ENCODE measurements at regions of chr1 and their contacts with region 1.

Region 1: DNA sequence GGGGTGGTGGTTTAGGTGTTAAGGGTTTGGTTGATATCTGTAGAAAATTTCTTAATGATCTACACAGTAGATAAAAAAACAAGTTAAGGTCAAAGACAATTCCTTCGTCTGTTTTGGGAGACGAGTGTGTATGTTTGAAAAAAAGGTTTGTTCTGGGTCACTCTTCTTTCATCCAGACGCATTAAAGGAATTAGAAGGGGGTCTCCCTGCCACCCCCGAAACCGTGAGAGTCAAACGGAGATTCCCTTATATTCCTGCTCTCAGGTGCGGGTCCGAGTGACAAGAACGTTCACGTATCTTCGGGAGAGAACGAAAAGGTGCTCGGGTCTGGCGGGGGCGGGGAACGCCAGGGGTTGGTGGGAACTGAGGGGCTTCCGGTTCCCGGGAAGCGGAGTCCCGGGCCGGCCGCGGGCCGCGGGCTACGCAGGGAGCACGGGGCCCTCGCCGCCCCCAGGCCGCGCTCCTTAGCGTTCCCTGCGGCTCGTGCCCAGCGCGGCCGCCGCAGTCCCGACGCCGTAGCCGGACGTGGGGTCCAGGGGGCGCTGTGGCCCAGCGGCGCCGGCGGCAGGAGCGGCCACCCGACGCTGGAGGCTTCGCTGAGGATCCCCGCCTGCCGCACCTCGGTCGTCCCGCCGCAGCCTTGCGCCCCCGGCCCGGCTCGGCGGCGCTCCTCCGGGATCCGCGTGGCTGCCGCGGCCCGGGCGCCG is at the start of gene ZFYVE9:
- DNase-seq: peak; percentile 43 to 91 (median 68)
- ATAC-seq: peak; percentile 82
- H3K4me3 ChIP-seq: peak within 1 kb of the TSS; percentile 63
- H3K4me3 Mint-ChIP-seq: peak within 1 kb of the TSS; percentile 97
- H3K27ac ChIP-seq: no peak within 1 kb of the TSS
- H3K27ac Mint-ChIP-seq: peak within 1 kb of the TSS; percentile 85
- H3K4me1 ChIP-seq: peaks cover 23% of the 10 kb centered on the region
- H3K4me1 Mint-ChIP-seq: peaks cover 36% of the 10 kb centered on the region
- H3K27me3 ChIP-seq: no peaks in the 10 kb centered on the region
- H3K27me3 Mint-ChIP-seq: no peaks in the 10 kb centered on the region
- CTCF ChIP-seq: peak; percentile 33
- total RNA-seq, gene ZFYVE9: 5.4 to 6.1 TPM

Region 2: GRCh38 chr1:51463561-51463960 is 678.1 kb before region 1 on chr1:
- CTCF ChIA-PET with region 1: no interaction called
- POLR2A ChIA-PET with region 1: no interaction called
- intact Hi-C with region 1: no loop called
- DNase-seq: no peak
- ATAC-seq: no peak
- H3K4me3 ChIP-seq: no peak overlapping the region
- H3K4me3 Mint-ChIP-seq: no peak overlapping the region
- H3K27ac ChIP-seq: no peak overlapping the region
- H3K27ac Mint-ChIP-seq: no peak overlapping the region
- H3K4me1 ChIP-seq: no peaks in the 10 kb centered on the region
- H3K4me1 Mint-ChIP-seq: no peaks in the 10 kb centered on the region
- H3K27me3 ChIP-seq: no peaks in the 10 kb centered on the region
- H3K27me3 Mint-ChIP-seq: no peaks in the 10 kb centered on the region
- CTCF ChIP-seq: no peak

Region 3: GRCh38 chr1:52268372-52268771 is 126.7 kb after region 1 on chr1:
- CTCF ChIA-PET with region 1: no interaction called
- POLR2A ChIA-PET with region 1: no interaction called
- intact Hi-C with region 1: no loop called
- DNase-seq: peak in 1 of 14 experiments; percentile 9
- ATAC-seq: no peak
- H3K4me3 ChIP-seq: no peak overlapping the region
- H3K4me3 Mint-ChIP-seq: no peak overlapping the region
- H3K27ac ChIP-seq: no peak overlapping the region
- H3K27ac Mint-ChIP-seq: no peak overlapping the region
- H3K4me1 ChIP-seq: no peaks in the 10 kb centered on the region
- H3K4me1 Mint-ChIP-seq: no peaks in the 10 kb centered on the region
- H3K27me3 ChIP-seq: no peaks in the 10 kb centered on the region
- H3K27me3 Mint-ChIP-seq: no peaks in the 10 kb centered on the region
- CTCF ChIP-seq: no peak

Region 4: DNA sequence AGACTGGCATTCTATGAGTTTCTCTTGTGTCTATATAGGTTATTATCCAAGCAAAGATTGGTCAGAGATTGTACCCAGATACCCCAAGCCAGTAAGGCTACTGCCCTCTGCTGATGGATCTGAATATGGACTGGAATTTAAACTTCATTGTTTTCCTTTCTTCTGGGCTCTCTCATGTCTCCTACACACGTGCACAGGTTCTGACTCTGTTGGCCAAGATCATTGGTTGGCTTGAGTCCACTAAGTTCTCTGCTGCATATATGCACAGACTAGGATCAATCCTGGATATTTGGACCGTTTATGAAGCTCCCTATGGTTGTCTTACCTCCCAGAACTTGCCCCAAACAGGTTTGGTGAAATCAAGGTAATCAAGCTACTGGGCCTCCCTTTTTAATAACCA is 154.7 kb after region 1 on chr1:
- CTCF ChIA-PET with region 1: no interaction called
- POLR2A ChIA-PET with region 1: no interaction called
- intact Hi-C with region 1: loop called in 1 of 2 experiments (anchors 5 kb)
- DNase-seq: peak in 3 of 14 experiments; percentile 42 to 49 (median 44)
- ATAC-seq: peak; percentile 41
- H3K4me3 ChIP-seq: no peak overlapping the region
- H3K4me3 Mint-ChIP-seq: no peak overlapping the region
- H3K27ac ChIP-seq: no peak overlapping the region
- H3K27ac Mint-ChIP-seq: no peak overlapping the region
- H3K4me1 ChIP-seq: no peaks in the 10 kb centered on the region
- H3K4me1 Mint-ChIP-seq: no peaks in the 10 kb centered on the region
- H3K27me3 ChIP-seq: no peaks in the 10 kb centered on the region
- H3K27me3 Mint-ChIP-seq: no peaks in the 10 kb centered on the region
- CTCF ChIP-seq: peak; percentile 70

Region 5: GRCh38 chr1:52365746-52366516 is 224.3 kb after region 1 on chr1 and contains the start of gene CC2D1B:
- CTCF ChIA-PET with region 1: no interaction called
- POLR2A ChIA-PET with region 1: interaction called, 4 read pairs
- intact Hi-C with region 1: loop called in 1 of 2 experiments (anchors 10 kb)
- DNase-seq: peak; percentile 97 to 100 (median 99)
- ATAC-seq: peak; percentile 79
- H3K4me3 ChIP-seq: peak within 1 kb of the TSS; percentile 76
- H3K4me3 Mint-ChIP-seq: peak within 1 kb of the TSS; percentile 94
- H3K27ac ChIP-seq: peak within 1 kb of the TSS; percentile 77 to 89
- H3K27ac Mint-ChIP-seq: peak within 1 kb of the TSS; percentile 96
- H3K4me1 ChIP-seq: peaks cover 50% of the 10 kb centered on the region
- H3K4me1 Mint-ChIP-seq: peaks cover 60% of the 10 kb centered on the region
- H3K27me3 ChIP-seq: no peaks in the 10 kb centered on the region
- H3K27me3 Mint-ChIP-seq: no peaks in the 10 kb centered on the region
- CTCF ChIP-seq: no peak
- total RNA-seq, gene CC2D1B: 46.5 to 47.5 TPM

Measured in CD4-positive, alpha-beta T cell (primary cell).